ENCODE measurements at regions of chr10 and their contacts with region 1.

Region 1: DNA sequence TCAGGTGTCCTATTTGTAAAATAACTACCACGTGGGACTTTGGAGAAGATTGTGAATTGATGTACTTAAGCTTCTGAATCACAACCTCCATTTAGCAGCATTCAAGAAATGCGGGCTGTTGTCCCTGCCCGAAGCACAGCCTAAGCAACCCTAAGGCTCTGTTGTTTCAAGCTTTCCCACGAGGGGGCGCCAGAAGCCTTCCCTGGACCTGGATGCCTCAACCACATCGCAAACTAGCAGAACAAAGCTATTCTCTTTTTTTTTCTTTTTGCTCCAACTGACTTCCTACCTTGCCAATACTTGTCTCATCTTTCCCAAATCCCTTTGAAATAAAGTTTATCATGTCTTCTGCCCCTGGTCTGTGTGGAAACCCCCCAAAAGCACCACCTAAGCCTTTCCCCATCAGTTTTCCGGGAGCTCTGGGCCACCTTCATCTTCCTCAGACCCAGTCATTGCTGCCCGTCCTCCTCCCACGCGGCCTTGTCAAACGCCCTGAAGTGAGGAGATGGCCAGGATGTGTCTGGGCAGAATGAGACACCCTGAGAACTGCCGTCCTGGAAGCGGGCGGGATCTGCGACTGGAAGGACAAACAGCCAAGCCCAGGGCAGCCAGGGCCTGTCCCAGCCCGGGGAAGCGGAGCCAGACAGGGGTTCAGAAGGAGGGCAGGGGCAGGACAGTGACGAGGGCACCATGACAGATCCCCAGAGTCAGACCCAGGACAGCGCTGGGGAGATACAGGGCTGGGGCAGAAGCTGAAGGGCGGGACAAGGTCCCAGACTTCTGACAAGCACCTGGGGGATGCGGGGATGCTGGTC is 112.7 kb downstream of the SLIT1 start:
- DNase-seq: peak; percentile 79 to 85
- H3K4me3 ChIP-seq: no peak overlapping the region
- H3K27ac ChIP-seq: no peak overlapping the region
- H3K4me1 ChIP-seq: no peaks in the 10 kb centered on the region
- H3K27me3 ChIP-seq: peaks cover 0 to 89% of the 10 kb centered on the region in 2 donors
- CTCF ChIP-seq: peak; percentile 76 to 94

Region 2: GRCh38 chr10:96955794-96956193 is 117.3 kb before region 1 on chr10:
- intact Hi-C with region 1: no loop called
- DNase-seq: no peak
- H3K4me3 ChIP-seq: no peak overlapping the region
- H3K27ac ChIP-seq: no peak overlapping the region
- H3K4me1 ChIP-seq: peaks cover 0 to 4% (median 0%) of the 10 kb centered on the region in 4 donors
- H3K27me3 ChIP-seq: no peaks in the 10 kb centered on the region
- CTCF ChIP-seq: no peak

Region 3: DNA sequence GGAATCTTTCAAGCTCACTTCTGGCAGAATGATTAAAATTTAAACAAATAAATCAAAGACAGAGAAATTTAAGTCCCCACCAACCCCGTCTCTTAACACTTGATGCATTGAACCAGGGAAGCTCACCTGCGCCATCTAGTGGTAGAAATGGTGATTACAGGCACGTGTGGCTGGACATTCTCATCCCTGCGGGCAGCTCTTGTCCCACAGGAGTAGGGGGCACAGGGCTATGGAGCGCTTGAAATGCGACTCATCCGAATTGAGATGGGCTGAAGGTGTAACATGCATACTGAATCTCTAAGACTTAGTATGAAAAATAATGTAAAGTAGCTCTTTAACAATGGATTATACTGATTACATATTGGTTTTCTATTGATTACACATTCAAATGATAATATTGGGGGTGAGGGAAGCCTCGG is 137.5 kb after region 1 on chr10:
- intact Hi-C with region 1: loop called (anchors 10 kb)
- DNase-seq: peak in 1 of 2 donors; percentile 63
- H3K4me3 ChIP-seq: no peak overlapping the region
- H3K27ac ChIP-seq: no peak overlapping the region
- H3K4me1 ChIP-seq: no peaks in the 10 kb centered on the region
- H3K27me3 ChIP-seq: peaks cover 0 to 16% of the 10 kb centered on the region in 2 donors
- CTCF ChIP-seq: peak; percentile 90 to 98

Region 4: DNA sequence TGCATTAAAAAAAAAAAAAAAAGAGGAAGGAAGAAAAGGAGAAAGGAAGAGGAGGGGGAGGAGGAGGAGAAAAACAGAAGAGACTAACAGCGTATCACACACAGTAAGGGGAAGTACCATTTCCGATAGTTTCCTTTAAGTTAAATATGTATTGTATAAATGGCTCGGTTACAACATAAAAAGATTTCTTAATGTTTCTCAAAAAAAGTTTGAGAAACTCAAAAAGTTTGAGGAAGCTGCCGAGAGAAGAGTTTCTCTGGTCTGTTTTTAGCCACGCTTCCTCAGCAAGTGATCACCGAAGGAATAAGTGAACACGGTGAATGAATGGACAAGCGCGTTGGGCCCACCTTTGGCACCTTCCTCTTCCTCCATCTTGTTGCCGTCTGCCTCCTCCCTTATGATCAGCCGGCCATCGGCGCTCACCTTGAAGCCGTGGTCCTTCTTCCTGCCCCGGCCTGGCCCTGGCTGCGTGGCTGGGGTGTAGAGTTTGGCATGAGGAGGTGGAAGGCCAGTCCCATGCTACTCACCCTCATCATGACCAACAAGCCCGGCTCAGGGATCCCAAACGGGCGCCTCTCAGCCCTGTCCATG is 292.8 kb after region 1 on chr10:
- intact Hi-C with region 1: loop called (anchors 10 kb)
- DNase-seq: no peak
- H3K4me3 ChIP-seq: no peak overlapping the region
- H3K27ac ChIP-seq: no peak overlapping the region
- H3K4me1 ChIP-seq: no peaks in the 10 kb centered on the region
- H3K27me3 ChIP-seq: no peaks in the 10 kb centered on the region
- CTCF ChIP-seq: no peak

Measured in tibial artery (tissue), 4 donors.